Gastrocnemius medialis (tissue), 4 donors: ENCODE measurements at regions of chr20 and their contacts with region 1.

Region 1: GRCh38 chr20:62511915-62512610 is 36.3 kb upstream of the GATA5 start:
- DNase-seq: peak; percentile 72 to 90
- ATAC-seq: peak; percentile 73 to 78
- H3K4me3 ChIP-seq: peak overlapping the region; percentile 3 to 46 (median 33)
- H3K27ac ChIP-seq: peak overlapping the region; percentile 90 to 99 (median 99)
- H3K4me1 ChIP-seq: peaks cover 35 to 38% of the 10 kb centered on the region in 2 donors
- H3K27me3 ChIP-seq: no peaks in the 10 kb centered on the region
- CTCF ChIP-seq: no peak
- POLR2A ChIP-seq: peak; percentile 62 to 66

Region 2: GRCh38 chr20:62500237-62500864 is 11.7 kb before region 1 on chr20:
- in situ Hi-C with region 1: no loop called
- intact Hi-C with region 1: no loop called
- DNase-seq: peak; percentile 66 to 79
- ATAC-seq: peak; percentile 62 to 78
- H3K4me3 ChIP-seq: no peak overlapping the region
- H3K27ac ChIP-seq: peak overlapping the region; percentile 35 to 63 (median 48)
- H3K4me1 ChIP-seq: peaks cover 19 to 33% of the 10 kb centered on the region in 2 donors
- H3K27me3 ChIP-seq: no peaks in the 10 kb centered on the region
- CTCF ChIP-seq: peak; percentile 93 to 98 (median 98)
- POLR2A ChIP-seq: no peak

Region 3: DNA sequence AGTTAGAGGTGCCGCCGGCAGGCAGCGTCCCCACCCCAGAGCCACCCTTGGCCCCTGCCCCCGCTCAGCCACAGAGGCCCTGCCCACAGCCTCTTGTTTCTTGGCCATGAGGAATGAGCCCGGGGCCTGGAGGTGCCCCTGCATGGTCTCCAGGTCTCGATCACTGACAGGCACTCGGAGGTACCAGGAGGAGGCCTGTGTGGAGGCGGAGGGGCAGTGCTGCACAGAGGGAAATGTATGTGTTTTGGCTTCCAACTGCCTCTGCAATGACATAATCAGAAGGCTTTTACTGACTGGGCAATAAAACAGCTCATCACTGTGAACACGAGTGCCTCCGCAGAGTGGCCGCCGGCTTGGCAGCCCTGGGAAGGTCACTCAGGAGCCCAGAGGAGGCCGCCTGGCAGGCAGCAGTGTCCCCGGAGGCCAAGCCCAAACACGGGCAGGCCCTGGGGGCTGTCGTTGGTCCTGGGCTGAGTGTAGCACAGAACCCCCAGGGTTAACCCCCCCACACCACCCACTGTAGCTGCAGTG is 24.9 kb after region 1 on chr20:
- in situ Hi-C with region 1: no loop called
- intact Hi-C with region 1: loop called (anchors 1 kb)
- DNase-seq: peak; percentile 74 to 88
- ATAC-seq: peak; percentile 60 to 67
- H3K4me3 ChIP-seq: no peak overlapping the region
- H3K27ac ChIP-seq: peak overlapping the region; percentile 98
- H3K4me1 ChIP-seq: peaks cover 52 to 59% of the 10 kb centered on the region in 2 donors
- H3K27me3 ChIP-seq: no peaks in the 10 kb centered on the region
- CTCF ChIP-seq: no peak
- POLR2A ChIP-seq: peak; percentile 42 to 64